PC-3 (cell line): ENCODE measurements at regions of chr19 and their contacts with region 1.

Region 1: DNA sequence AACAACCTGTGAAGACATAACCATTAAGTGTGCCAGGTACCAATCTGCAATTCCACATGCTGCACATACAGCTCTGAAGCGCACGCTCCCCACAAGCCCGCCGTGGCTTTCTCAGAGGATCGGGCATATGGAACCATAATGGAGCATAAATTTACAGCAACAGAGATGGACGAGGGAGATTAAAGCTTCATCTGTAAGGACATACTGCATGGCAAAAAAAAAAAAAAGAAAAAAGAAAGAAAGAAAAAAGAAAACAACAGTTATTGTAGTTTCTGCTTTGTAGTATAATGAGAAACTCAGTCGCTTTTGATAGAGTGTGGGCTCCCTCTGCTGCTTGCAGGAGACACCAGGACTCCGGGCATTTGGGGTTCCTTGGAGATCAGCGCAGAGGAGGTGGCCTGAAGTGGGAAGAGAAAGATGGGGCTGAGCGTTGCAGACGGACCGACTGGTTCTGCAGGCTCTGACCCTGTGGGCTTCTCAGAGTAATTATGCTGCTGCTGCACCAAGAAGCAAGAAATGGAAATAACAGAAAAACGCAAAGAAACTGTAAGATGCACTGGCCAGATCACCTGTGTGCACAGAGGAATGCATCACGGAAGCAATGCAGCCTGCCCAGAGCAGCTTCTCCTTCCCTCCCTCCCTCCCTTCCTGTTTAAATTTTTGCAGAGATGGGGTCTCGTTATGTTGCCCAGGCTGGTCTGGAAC is 10.8 kb upstream of the PDCD5 start:
- DNase-seq: peak; percentile 68
- ATAC-seq: peak; percentile 96
- H3K4me3 ChIP-seq: peak overlapping the region; percentile 61
- H3K27ac ChIP-seq: no peak overlapping the region
- H3K4me1 ChIP-seq: no peaks in the 10 kb centered on the region
- H3K27me3 ChIP-seq: no peaks in the 10 kb centered on the region
- CTCF ChIP-seq: peak; percentile 88

Region 2: DNA sequence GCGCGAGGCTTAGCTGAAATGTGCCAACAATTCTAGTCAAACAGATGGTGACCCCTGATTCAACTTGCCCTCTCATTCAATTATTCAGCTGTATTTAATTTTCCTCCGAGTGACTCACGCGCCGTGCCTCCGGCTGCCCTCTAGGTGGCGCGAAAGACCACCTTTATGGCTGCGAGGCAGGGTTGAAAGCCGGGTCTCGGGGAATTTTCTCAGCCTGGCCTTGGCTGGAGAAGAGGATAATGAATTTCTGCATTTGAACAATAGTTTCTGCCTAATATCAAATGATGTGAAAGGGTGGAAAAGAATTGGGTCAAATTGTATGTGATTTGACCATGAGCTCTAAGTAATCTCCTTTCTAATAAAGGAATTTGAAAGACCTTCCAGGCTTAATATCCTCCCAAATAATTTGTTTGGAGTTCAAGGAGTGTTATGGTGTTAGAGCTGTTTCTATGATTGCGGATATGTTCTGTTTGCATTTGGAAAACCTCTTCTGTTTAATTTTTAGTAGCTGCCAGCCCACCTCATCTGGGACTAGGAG is 1887.2 kb before region 1 on chr19:
- CTCF ChIA-PET with region 1: interaction called, 15 read pairs
- POLR2A ChIA-PET with region 1: no interaction called
- intact Hi-C with region 1: no loop called
- DNase-seq: peak; percentile 70
- ATAC-seq: peak; percentile 62
- H3K4me3 ChIP-seq: no peak overlapping the region
- H3K27ac ChIP-seq: no peak overlapping the region
- H3K4me1 ChIP-seq: 0 out of 2 replicates have a peak, but pooled peaks cover 3% of the 10 kb centered on the region
- H3K27me3 ChIP-seq: 0 out of 2 replicates have a peak, but pooled peaks cover 1% of the 10 kb centered on the region
- CTCF ChIP-seq: peak; percentile 84

Region 3: DNA sequence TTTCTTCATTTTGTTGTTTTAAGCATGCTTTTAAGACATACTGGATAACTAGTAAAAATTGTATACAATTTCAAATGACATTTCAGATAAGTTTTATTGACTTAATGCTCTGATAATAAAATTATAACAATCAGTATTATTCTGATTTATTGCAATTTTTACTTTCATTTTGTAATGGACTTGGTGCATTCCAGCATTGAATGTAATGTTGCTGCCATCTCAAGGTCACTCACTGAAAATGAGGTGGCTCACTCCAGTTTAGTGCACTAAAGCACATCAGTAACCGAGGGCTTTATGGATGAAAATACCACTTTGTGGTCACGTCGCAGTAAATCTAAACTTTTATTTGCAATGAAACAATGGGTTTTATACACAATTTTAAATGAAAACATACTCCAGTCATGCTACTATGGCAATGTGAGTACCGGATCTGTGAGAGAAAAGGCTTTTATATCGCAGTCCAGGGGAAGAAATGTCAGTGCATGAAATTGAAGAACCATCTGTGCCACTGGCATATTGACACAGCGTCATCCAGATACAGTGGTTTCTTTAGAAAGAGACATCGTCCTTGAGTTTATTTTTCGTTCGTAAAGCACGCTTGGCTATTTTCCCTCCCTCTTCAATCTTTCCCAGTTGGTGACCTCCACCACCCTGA is 245.5 kb before region 1 on chr19:
- CTCF ChIA-PET with region 1: no interaction called
- POLR2A ChIA-PET with region 1: no interaction called
- intact Hi-C with region 1: loop called (anchors 10 kb)
- DNase-seq: no peak
- ATAC-seq: peak; percentile 45
- H3K4me3 ChIP-seq: peak overlapping the region; percentile 44; the same call in 1 of the 2 replicates
- H3K27ac ChIP-seq: no peak overlapping the region
- H3K4me1 ChIP-seq: peaks cover 12% of the 10 kb centered on the region; the same call in 1 of the 2 replicates
- H3K27me3 ChIP-seq: no peaks in the 10 kb centered on the region
- CTCF ChIP-seq: peak; percentile 39

Region 4: DNA sequence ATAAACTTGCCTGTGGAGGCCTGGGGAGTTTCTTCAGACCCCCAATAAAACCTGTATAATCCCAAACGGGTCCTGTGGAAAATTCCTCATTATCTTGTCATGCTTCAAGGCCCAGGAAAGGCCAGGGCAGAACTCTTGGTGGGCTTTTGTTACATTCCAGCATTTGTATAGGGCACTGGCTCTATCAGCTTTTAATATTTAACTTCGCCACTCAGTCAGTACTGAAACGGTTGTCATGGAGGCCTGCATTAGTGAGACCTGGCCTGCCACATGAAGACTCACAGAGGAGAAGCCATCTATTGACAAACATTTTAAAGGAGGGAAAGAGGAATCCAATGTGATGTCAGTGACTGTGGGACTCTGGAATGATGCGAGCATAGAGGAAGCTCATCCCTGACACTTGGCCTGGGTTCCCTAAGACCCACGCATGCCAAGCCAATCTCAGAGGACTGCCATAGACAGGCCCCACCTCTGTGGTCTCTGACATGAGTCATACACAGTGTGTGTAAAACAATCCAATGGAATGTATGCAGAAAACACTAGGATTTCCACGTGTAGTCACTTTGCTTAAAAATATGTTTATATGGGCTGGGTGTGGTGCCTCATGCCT is 172.6 kb before region 1 on chr19:
- CTCF ChIA-PET with region 1: interaction called, 15 read pairs
- POLR2A ChIA-PET with region 1: no interaction called
- intact Hi-C with region 1: no loop called
- DNase-seq: peak; percentile 58
- ATAC-seq: peak; percentile 83
- H3K4me3 ChIP-seq: no peak overlapping the region
- H3K27ac ChIP-seq: no peak overlapping the region
- H3K4me1 ChIP-seq: peaks cover 6% of the 10 kb centered on the region
- H3K27me3 ChIP-seq: no peaks in the 10 kb centered on the region
- CTCF ChIP-seq: no peak

Region 5: GRCh38 chr19:32489971-32490370 is 80.3 kb before region 1 on chr19:
- CTCF ChIA-PET with region 1: no interaction called
- POLR2A ChIA-PET with region 1: no interaction called
- intact Hi-C with region 1: no loop called
- DNase-seq: no peak
- ATAC-seq: no peak
- H3K4me3 ChIP-seq: no peak overlapping the region
- H3K27ac ChIP-seq: no peak overlapping the region
- H3K4me1 ChIP-seq: no peaks in the 10 kb centered on the region
- H3K27me3 ChIP-seq: no peaks in the 10 kb centered on the region
- CTCF ChIP-seq: no peak

Region 6: GRCh38 chr19:32519023-32519422 is 51.2 kb before region 1 on chr19:
- CTCF ChIA-PET with region 1: interaction called, 12 read pairs
- POLR2A ChIA-PET with region 1: no interaction called
- intact Hi-C with region 1: no loop called
- DNase-seq: no peak
- ATAC-seq: no peak
- H3K4me3 ChIP-seq: no peak overlapping the region
- H3K27ac ChIP-seq: no peak overlapping the region
- H3K4me1 ChIP-seq: no peaks in the 10 kb centered on the region
- H3K27me3 ChIP-seq: peaks cover 11% of the 10 kb centered on the region
- CTCF ChIP-seq: no peak

Region 7: DNA sequence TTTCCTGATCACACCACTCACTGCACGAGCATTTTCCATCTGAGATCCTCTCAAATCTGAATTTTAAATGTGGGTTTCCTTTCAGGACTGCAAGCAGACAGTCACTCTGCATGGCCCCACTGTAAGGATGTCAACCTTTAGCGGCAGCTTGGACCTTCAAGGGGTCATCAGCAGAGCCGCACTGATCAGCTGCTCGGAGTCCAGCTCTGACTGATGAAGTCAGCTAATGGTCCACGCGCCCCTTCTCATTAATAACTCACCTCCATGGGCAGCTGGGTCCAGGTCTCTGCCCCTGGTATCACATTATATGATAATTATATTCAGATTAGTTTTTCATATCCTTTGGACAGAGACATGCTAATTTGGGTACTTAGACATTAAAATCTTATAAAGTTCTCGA is 25.3 kb before region 1 on chr19:
- CTCF ChIA-PET with region 1: no interaction called
- POLR2A ChIA-PET with region 1: no interaction called
- intact Hi-C with region 1: no loop called
- DNase-seq: no peak
- ATAC-seq: no peak
- H3K4me3 ChIP-seq: no peak overlapping the region
- H3K27ac ChIP-seq: no peak overlapping the region
- H3K4me1 ChIP-seq: no peaks in the 10 kb centered on the region
- H3K27me3 ChIP-seq: no peaks in the 10 kb centered on the region
- CTCF ChIP-seq: no peak

Region 8: GRCh38 chr19:32611161-32611560 is 40.9 kb after region 1 on chr19:
- CTCF ChIA-PET with region 1: no interaction called
- POLR2A ChIA-PET with region 1: no interaction called
- intact Hi-C with region 1: no loop called
- DNase-seq: no peak
- ATAC-seq: no peak
- H3K4me3 ChIP-seq: no peak overlapping the region
- H3K27ac ChIP-seq: no peak overlapping the region
- H3K4me1 ChIP-seq: no peaks in the 10 kb centered on the region
- H3K27me3 ChIP-seq: no peaks in the 10 kb centered on the region
- CTCF ChIP-seq: no peak